Activated B cell treated with CpG ODN at 0.5 μM for 24 hours (primary cell): ENCODE measurements at regions of chr18 and their contacts with region 1.

Region 1: DNA sequence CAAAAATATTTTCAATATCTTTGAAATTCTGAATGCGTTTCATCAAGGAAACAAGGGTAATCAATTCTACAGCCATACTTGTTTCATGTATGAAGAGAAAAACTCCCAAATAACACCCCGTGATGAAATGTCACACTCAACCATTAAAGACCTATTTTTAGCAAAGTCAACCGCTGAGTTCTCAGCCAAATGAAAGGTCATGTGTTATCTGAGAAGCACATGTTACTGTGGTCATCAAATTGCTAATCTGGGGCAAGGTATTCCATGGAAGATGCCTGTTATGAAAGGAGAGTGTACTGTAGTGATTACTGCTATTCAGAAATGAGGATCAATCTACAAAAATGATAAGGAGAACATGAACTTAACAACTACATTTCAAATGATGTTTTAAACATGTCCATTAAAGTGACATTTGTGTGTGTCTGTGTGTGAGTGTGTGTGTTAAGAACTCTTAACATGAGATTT is 126.7 kb downstream of the BCL2 start:
- DNase-seq: no peak
- ATAC-seq: peak; percentile 37
- H3K4me3 Mint-ChIP-seq: peak overlapping the region; percentile 26
- H3K27ac Mint-ChIP-seq: peak overlapping the region; percentile 74
- H3K4me1 Mint-ChIP-seq: peaks cover 61% of the 10 kb centered on the region
- H3K27me3 Mint-ChIP-seq: no peaks in the 10 kb centered on the region
- CTCF ChIP-seq: no peak

Region 2: DNA sequence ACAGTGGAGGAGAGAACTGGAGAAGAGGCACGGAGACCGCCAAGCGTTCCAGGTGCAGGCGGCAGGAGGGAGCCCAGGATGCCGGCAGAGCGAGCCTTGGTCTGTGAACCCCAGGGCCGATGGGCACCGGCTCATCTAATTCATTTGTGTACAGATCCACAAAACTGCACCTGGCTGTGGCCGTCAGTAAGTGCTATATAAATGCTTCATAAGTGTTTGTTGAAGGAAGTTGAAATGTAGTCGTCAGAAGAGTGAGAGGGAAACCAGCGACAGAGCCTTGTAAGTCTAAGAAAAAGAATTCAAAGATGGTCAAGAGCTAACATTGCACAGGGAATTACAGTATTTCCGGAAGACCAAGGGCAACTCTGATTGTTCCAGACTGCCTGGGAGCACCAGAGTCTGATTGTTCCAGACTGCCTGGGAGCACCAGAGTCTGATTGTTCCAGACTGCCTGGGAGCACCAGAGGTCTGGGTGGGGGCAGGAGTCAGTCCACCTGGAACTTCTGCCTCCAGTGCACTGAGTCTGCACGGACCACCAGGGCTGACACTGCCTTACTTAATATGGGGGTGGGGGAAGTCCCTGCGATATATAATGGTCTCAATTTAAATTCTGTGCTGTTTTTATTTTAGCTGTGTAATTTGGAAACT is 14.3 kb after region 1 on chr18:
- CTCF ChIA-PET with region 1: no interaction called
- POLR2A ChIA-PET with region 1: interaction called, 4 read pairs
- intact Hi-C with region 1: loop called (anchors 1 kb)
- DNase-seq: no peak
- ATAC-seq: peak; percentile 60
- H3K4me3 Mint-ChIP-seq: peak overlapping the region; percentile 67
- H3K27ac Mint-ChIP-seq: peak overlapping the region; percentile 82
- H3K4me1 Mint-ChIP-seq: peaks cover 80% of the 10 kb centered on the region
- H3K27me3 Mint-ChIP-seq: no peaks in the 10 kb centered on the region
- CTCF ChIP-seq: no peak

Region 3: GRCh38 chr18:63553117-63553516 is 360.2 kb after region 1 on chr18:
- CTCF ChIA-PET with region 1: no interaction called
- POLR2A ChIA-PET with region 1: no interaction called
- intact Hi-C with region 1: no loop called
- DNase-seq: no peak
- ATAC-seq: no peak
- H3K4me3 Mint-ChIP-seq: no peak overlapping the region
- H3K27ac Mint-ChIP-seq: no peak overlapping the region
- H3K4me1 Mint-ChIP-seq: no peaks in the 10 kb centered on the region
- H3K27me3 Mint-ChIP-seq: peaks cover 2% of the 10 kb centered on the region
- CTCF ChIP-seq: no peak